ENCODE measurements at regions of chr5 and their contacts with region 1.

Region 1: DNA sequence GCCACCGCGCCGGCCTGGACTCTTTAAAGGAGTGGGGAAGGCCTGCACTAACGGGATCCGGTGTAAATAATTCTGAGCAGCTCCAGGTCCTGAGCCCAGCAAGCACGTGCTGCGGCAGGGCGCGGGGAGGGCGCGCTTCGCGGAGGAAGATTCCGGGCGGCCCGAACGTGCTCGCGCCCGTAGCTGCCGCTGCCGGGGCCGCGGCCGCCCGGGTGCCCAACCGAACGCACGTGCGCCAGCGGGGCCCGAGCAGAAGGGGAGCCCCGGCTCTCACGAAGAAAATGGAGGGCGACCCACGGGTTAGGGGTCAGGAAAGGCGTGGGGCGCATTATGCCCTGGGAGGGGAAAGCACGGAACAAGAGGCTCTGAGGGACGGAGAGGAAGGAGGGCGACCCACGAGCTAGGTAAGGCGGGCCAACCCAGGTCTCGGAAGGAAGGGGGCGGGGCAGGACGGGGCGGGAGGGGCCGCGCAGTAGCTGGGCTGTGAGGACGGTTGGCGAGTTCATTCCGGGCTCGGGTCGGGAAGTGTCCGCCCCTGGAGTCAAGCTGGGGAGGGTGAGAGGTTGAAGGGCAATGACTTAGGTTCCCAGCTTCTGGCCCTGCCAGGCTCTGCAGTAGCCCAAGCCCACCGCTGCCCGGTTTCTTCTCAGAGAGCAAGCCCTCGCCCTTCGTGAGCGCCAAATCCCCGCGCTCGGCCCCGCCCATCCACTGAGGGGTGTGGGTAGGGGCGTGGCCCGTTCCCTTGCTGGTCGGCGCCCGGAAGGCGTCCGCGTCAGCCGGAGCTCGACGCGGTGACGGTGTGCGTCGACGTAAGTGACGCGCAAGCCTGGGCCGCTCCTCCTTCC is at the start of gene ZNF131:
- DNase-seq: peak; percentile 95 to 99 (median 97)
- ATAC-seq: peak; percentile 87
- H3K4me3 ChIP-seq: peak within 1 kb of the TSS; percentile 74 to 82
- H3K4me3 Mint-ChIP-seq: peak within 1 kb of the TSS; percentile 96
- H3K27ac ChIP-seq: peak within 1 kb of the TSS; percentile 87 to 98
- H3K27ac Mint-ChIP-seq: peak within 1 kb of the TSS; percentile 98
- H3K4me1 ChIP-seq: peaks cover 34% of the 10 kb centered on the region
- H3K4me1 Mint-ChIP-seq: peaks cover 39% of the 10 kb centered on the region
- H3K27me3 ChIP-seq: no peaks in the 10 kb centered on the region
- H3K27me3 Mint-ChIP-seq: no peaks in the 10 kb centered on the region
- CTCF ChIP-seq: no peak
- total RNA-seq, gene ZNF131: 76.7 to 84.9 TPM

Region 2: GRCh38 chr5:42419294-42419693 is 701.6 kb before region 1 on chr5:
- CTCF ChIA-PET with region 1: no interaction called
- POLR2A ChIA-PET with region 1: no interaction called
- intact Hi-C with region 1: no loop called
- DNase-seq: no peak
- ATAC-seq: no peak
- H3K4me3 ChIP-seq: no peak overlapping the region
- H3K4me3 Mint-ChIP-seq: no peak overlapping the region
- H3K27ac ChIP-seq: no peak overlapping the region
- H3K27ac Mint-ChIP-seq: no peak overlapping the region
- H3K4me1 ChIP-seq: peaks cover 5% of the 10 kb centered on the region
- H3K4me1 Mint-ChIP-seq: no peaks in the 10 kb centered on the region
- H3K27me3 ChIP-seq: no peaks in the 10 kb centered on the region
- H3K27me3 Mint-ChIP-seq: peaks cover 5% of the 10 kb centered on the region
- CTCF ChIP-seq: no peak

Region 3: DNA sequence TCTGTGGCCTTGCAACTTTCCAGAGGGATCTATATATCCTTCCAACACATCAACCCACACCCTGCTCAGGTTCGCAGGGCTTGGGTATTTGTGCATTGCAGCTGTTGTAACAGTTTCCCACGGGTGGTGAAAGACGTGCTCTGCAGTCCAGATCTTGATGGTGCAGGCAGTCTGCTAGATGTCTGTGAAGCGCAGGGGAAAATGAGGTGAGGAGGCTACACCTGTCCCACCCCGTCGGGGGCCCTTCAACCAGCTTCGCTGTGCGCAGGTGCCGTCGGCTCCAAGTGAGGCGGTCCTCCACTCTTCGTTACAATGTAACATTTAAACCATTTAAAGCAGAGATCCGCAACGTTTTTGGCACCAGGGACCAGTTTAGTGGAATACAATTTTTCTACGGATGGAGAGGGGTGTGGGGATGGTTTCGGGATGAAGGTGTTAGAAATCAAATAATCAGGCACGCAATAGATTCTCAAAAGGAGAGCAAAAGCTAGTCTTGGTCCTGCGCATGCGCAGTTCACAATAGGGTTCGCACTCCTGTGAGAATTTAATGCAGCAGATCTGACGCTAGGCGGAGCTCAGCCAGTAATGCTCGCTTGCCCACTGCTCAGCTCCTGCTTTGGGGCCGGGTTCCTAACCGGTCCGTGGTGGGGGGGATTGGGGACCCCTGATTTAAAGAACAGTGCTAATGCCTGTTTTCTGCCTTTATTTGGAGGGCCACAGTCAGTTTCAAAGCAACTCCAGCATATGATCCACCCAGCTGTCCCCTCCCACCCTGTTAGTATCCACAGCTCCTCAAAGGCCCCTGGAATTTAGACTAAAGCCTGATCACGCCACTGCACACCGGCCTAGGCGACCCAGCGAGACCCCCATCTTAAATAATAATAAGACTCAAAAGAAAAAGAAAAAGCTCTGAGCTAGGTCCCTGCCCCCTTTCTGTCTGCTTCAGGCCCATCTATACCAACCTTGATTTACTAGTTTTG is 212.1 kb before region 1 on chr5:
- CTCF ChIA-PET with region 1: interaction called, 4 read pairs
- POLR2A ChIA-PET with region 1: interaction called, 18 read pairs
- intact Hi-C with region 1: loop called (anchors 5 kb)
- DNase-seq: peak; percentile 78 to 96 (median 90)
- ATAC-seq: peak; percentile 91
- H3K4me3 ChIP-seq: peak overlapping the region; percentile 65 to 71
- H3K4me3 Mint-ChIP-seq: peak overlapping the region; percentile 93
- H3K27ac ChIP-seq: peak overlapping the region; percentile 57 to 60
- H3K27ac Mint-ChIP-seq: peak overlapping the region; percentile 95
- H3K4me1 ChIP-seq: peaks cover 9% of the 10 kb centered on the region
- H3K4me1 Mint-ChIP-seq: peaks cover 14% of the 10 kb centered on the region
- H3K27me3 ChIP-seq: no peaks in the 10 kb centered on the region
- H3K27me3 Mint-ChIP-seq: peaks cover 2% of the 10 kb centered on the region
- CTCF ChIP-seq: peak; percentile 86

Region 4: DNA sequence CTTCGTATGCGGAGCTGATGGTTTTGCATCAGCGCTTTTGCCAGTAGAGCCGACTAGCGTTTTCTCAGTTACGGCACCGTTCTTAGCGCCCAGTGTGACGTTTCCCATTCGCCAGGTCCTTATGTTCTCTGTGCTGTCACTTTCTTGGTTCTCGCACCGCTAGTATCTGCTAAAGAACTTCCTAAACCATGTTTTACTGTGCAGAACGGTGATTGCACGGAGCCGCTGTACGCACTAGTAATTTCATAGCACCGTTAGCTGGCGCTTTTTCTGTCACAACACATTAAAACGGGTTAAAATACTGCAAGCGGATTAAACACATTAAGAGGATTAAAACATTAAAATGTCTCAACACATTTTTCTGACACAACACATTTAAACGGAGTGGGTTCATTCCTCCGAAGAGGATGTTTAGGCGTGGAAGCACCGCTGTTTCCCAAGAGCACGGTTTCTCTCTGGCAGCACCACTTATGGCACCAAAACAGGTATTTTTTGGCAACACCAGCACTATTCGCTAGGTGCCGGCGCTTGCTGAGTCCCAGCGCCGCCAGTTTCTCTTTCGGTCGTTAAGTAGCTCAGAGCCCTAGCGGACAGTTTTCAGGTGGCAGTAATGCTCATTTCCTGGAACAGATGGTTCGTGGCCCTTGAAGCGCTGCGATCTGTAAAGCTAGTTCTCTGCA is 101.2 kb before region 1 on chr5:
- CTCF ChIA-PET with region 1: interaction called, 4 read pairs
- POLR2A ChIA-PET with region 1: interaction called, 66 read pairs
- intact Hi-C with region 1: loop called in 1 of 2 experiments (anchors 1 kb)
- DNase-seq: peak; percentile 69 to 96 (median 84)
- ATAC-seq: peak; percentile 66
- H3K4me3 ChIP-seq: peak overlapping the region; percentile 70 to 73
- H3K4me3 Mint-ChIP-seq: peak overlapping the region; percentile 98
- H3K27ac ChIP-seq: peak overlapping the region; percentile 97 to 98
- H3K27ac Mint-ChIP-seq: peak overlapping the region; percentile 100
- H3K4me1 ChIP-seq: peaks cover 40% of the 10 kb centered on the region
- H3K4me1 Mint-ChIP-seq: peaks cover 43% of the 10 kb centered on the region
- H3K27me3 ChIP-seq: no peaks in the 10 kb centered on the region
- H3K27me3 Mint-ChIP-seq: no peaks in the 10 kb centered on the region
- CTCF ChIP-seq: peak; percentile 71

Region 5: GRCh38 chr5:43110606-43111442 is 10.1 kb before region 1 on chr5:
- CTCF ChIA-PET with region 1: interaction called, 149 read pairs
- POLR2A ChIA-PET with region 1: interaction called, 47 read pairs
- intact Hi-C with region 1: loop called (anchors 1 to 2 kb)
- DNase-seq: peak in 5 of 9 experiments; percentile 20 to 64 (median 43)
- ATAC-seq: peak; percentile 75
- H3K4me3 ChIP-seq: no peak overlapping the region
- H3K4me3 Mint-ChIP-seq: peak overlapping the region; percentile 47
- H3K27ac ChIP-seq: no peak overlapping the region
- H3K27ac Mint-ChIP-seq: peak overlapping the region; percentile 82
- H3K4me1 ChIP-seq: peaks cover 27% of the 10 kb centered on the region
- H3K4me1 Mint-ChIP-seq: peaks cover 25% of the 10 kb centered on the region
- H3K27me3 ChIP-seq: no peaks in the 10 kb centered on the region
- H3K27me3 Mint-ChIP-seq: no peaks in the 10 kb centered on the region
- CTCF ChIP-seq: peak; percentile 19

Region 6: GRCh38 chr5:43389679-43390329 is 268.9 kb after region 1 on chr5:
- CTCF ChIA-PET with region 1: interaction called, 14 read pairs
- POLR2A ChIA-PET with region 1: no interaction called
- intact Hi-C with region 1: loop called in 1 of 2 experiments (anchors 5 kb)
- DNase-seq: peak in 7 of 9 experiments; percentile 11 to 73 (median 43)
- ATAC-seq: peak; percentile 64
- H3K4me3 ChIP-seq: no peak overlapping the region
- H3K4me3 Mint-ChIP-seq: no peak overlapping the region
- H3K27ac ChIP-seq: no peak overlapping the region
- H3K27ac Mint-ChIP-seq: no peak overlapping the region
- H3K4me1 ChIP-seq: no peaks in the 10 kb centered on the region
- H3K4me1 Mint-ChIP-seq: peaks cover 35% of the 10 kb centered on the region
- H3K27me3 ChIP-seq: no peaks in the 10 kb centered on the region
- H3K27me3 Mint-ChIP-seq: no peaks in the 10 kb centered on the region
- CTCF ChIP-seq: peak; percentile 87

Region 7: GRCh38 chr5:43602461-43603343 is 481.8 kb after region 1 on chr5 and contains the start of gene NNT:
- CTCF ChIA-PET with region 1: no interaction called
- POLR2A ChIA-PET with region 1: interaction called, 4 read pairs
- intact Hi-C with region 1: loop called (anchors 5 kb)
- DNase-seq: peak; percentile 46 to 87 (median 78)
- ATAC-seq: peak; percentile 71
- H3K4me3 ChIP-seq: peak within 1 kb of the TSS; percentile 95 to 98
- H3K4me3 Mint-ChIP-seq: peak within 1 kb of the TSS; percentile 89
- H3K27ac ChIP-seq: peak within 1 kb of the TSS; percentile 85 to 88
- H3K27ac Mint-ChIP-seq: peak within 1 kb of the TSS; percentile 92
- H3K4me1 ChIP-seq: peaks cover 14% of the 10 kb centered on the region
- H3K4me1 Mint-ChIP-seq: peaks cover 59% of the 10 kb centered on the region
- H3K27me3 ChIP-seq: no peaks in the 10 kb centered on the region
- H3K27me3 Mint-ChIP-seq: no peaks in the 10 kb centered on the region
- CTCF ChIP-seq: no peak
- total RNA-seq, gene NNT: 19.4 to 20.2 TPM

Measured in CD8-positive, alpha-beta T cell (primary cell).